ENCODE measurements at regions of chr11 and their contacts with region 1.

Region 1: GRCh38 chr11:77091146-77091940 is 11.3 kb upstream of the OMP start:
- DNase-seq: peak; percentile 66 to 88 (median 73)
- ATAC-seq: peak; percentile 59 to 80 (median 76)
- H3K4me3 ChIP-seq: no peak overlapping the region
- H3K27ac ChIP-seq: no peak overlapping the region
- H3K4me1 ChIP-seq: peaks cover 0 to 1% (median 0%) of the 10 kb centered on the region in 12 donors
- H3K27me3 ChIP-seq: no peaks in the 10 kb centered on the region
- CTCF ChIP-seq: peak; percentile 83 to 95 (median 90)
- POLR2A ChIP-seq: no peak

Region 2: GRCh38 chr11:76734456-76735420 is 356.6 kb before region 1 on chr11:
- intact Hi-C with region 1: loop called in 1 of 10 experiments (anchors 10 kb)
- DNase-seq: no peak
- ATAC-seq: no peak
- H3K4me3 ChIP-seq: no peak overlapping the region
- H3K27ac ChIP-seq: no peak overlapping the region
- H3K4me1 ChIP-seq: peaks cover 0 to 16% (median 1%) of the 10 kb centered on the region in 12 donors
- H3K27me3 ChIP-seq: no peaks in the 10 kb centered on the region
- CTCF ChIP-seq: no peak
- POLR2A ChIP-seq: no peak

Region 3: DNA sequence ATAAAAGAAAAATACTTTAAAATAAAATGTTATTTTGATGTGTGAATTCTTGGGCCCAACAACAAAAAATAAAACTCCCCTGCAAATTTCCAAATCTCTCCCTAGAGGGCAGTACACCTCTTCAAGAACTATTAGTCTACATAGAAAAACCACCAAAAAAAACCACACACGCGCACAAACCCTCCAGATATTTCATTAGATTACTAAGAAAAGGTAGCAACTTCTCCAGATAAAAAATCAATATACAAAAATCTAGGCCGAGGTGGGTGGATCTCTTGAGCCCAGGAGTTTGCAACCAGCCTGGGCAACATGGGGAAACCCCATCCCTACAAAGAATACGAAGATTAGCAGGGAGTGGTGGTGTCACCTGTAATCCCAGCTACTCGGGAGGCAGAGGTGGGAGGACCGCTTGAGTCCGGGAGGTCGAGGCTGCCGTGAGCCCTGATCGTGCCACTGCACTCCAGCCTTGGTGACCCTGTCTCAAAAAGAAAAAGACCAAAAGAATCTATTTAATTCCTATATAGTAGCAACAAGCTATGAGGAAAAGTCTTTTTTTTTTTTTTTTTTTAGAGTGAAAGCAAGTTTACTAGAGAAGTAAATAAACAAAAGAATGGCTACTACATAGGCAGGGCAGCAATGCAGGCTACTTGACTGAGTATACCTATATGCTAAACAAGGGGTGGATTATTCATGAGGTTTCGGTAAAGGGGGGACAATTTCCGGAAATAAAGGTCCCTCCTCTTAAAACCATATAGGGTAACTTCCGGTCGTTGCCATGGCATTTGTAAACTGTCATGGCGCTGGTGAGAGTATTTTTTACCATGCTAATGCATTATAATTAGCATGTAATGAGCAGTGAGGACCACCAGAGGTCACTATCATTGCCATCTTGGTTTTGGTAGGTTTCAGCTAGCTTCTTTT is 44.1 kb before region 1 on chr11:
- intact Hi-C with region 1: loop called (anchors 1 to 2 kb)
- DNase-seq: peak in 4 of 5 donors; percentile 64 to 84 (median 77)
- ATAC-seq: peak; percentile 81 to 95 (median 88)
- H3K4me3 ChIP-seq: peak overlapping the region in 9 of 12 donors; percentile 24 to 56 (median 38)
- H3K27ac ChIP-seq: peak overlapping the region in 3 of 12 donors; percentile 9 to 49 (median 17)
- H3K4me1 ChIP-seq: peaks cover 0 to 17% (median 4%) of the 10 kb centered on the region in 12 donors
- H3K27me3 ChIP-seq: peaks cover 5 to 35% (median 18%) of the 10 kb centered on the region in 9 donors
- CTCF ChIP-seq: peak; percentile 62 to 81 (median 72)
- POLR2A ChIP-seq: no peak

Region 4: DNA sequence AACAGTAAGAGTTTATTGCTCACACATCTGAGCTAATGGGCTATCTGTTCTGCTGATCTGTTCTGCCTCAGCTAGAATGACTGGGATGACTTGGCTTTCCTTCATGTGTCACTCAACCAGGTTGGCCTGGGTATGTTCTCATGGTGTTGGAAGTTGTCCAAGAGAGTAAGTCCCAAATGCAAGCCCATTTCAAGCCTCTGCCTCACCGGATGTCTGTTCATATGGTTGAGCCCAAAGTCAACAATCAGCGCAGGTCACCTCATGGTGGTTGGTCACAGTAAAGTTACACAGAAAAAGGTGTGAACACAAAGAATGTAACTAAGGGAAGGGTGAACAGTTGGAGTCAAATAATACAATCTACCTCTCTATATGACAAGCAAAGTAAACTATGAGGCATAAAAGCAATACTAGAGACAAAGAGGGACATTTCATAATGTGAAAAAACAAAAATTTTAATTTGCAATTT is 208.2 kb after region 1 on chr11:
- intact Hi-C with region 1: no loop called
- DNase-seq: no peak
- ATAC-seq: no peak
- H3K4me3 ChIP-seq: no peak overlapping the region
- H3K27ac ChIP-seq: no peak overlapping the region
- H3K4me1 ChIP-seq: no peaks in the 10 kb centered on the region
- H3K27me3 ChIP-seq: no peaks in the 10 kb centered on the region
- CTCF ChIP-seq: no peak
- POLR2A ChIP-seq: no peak

Measured in heart left ventricle (tissue), 16 donors.